ENCODE measurements at regions of chr7 and their contacts with region 1.

Region 1: DNA sequence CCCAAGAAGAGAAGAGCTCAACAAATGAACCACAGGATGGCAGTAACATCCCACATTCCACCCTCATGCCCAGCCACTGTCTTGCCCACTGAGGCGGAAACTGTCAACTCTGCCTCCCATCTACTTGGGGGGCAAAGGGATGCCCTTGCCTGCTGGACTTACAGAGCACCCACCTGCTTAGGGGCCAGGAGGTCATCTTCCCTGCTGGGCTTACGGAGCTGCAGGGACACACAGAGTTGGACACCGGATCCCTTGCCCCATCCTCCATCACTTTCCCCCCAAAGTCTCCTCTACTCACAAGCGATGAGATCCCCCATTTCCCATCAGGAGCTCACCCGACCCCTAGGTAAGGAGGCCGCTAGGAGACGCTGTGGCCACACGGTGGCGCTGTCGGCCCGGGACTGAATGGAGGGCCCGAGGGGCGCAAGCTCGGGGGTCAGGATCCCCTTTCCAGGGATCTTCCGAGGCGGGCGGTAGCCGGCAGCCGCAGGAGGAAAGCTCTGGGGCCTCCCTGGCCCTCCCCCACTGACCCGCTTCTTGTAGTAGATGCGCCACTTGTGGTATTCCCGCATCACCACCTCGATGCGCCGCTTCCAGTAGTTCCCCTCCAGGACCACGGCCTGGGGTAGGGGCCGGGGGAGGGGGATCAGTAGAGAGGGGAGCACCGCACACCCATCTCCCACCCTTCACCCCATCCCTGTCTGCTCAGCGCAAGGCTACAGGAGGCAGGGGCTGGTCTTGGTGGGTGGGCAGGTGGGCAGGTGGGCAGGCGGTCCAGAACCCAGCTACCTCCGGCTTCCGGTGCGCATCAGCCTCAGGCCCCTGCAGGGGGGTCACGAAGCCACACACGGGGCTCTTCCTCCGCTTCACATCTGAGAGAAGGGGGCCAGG is 17.3 kb downstream of the MLXIPL start:
- DNase-seq: peak; percentile 46 to 53
- H3K4me3 ChIP-seq: no peak overlapping the region
- H3K27ac ChIP-seq: no peak overlapping the region
- H3K4me1 ChIP-seq: peaks cover 0 to 4% of the 10 kb centered on the region in 2 donors
- H3K27me3 ChIP-seq: no peaks in the 10 kb centered on the region
- CTCF ChIP-seq: peak; percentile 77 to 94 (median 88)
- POLR2A ChIP-seq: no peak

Region 2: GRCh38 chr7:73726083-73726466 is 119.0 kb after region 1 on chr7:
- intact Hi-C with region 1: loop called (anchors 2 kb)
- DNase-seq: no peak
- H3K4me3 ChIP-seq: no peak overlapping the region
- H3K27ac ChIP-seq: no peak overlapping the region
- H3K4me1 ChIP-seq: peaks cover 8 to 12% of the 10 kb centered on the region in 2 donors
- H3K27me3 ChIP-seq: no peaks in the 10 kb centered on the region
- CTCF ChIP-seq: peak in 2 of 6 experiments; percentile 1 to 2
- POLR2A ChIP-seq: no peak

Region 3: GRCh38 chr7:73858807-73859206 is 251.8 kb after region 1 on chr7:
- intact Hi-C with region 1: loop called (anchors 5 kb)
- DNase-seq: no peak
- H3K4me3 ChIP-seq: no peak overlapping the region
- H3K27ac ChIP-seq: no peak overlapping the region
- H3K4me1 ChIP-seq: no peaks in the 10 kb centered on the region
- H3K27me3 ChIP-seq: no peaks in the 10 kb centered on the region
- CTCF ChIP-seq: no peak
- POLR2A ChIP-seq: no peak

Measured in thyroid gland (tissue), 4 donors.